ENCODE measurements at regions of chr4 and their contacts with region 1.

Region 1: DNA sequence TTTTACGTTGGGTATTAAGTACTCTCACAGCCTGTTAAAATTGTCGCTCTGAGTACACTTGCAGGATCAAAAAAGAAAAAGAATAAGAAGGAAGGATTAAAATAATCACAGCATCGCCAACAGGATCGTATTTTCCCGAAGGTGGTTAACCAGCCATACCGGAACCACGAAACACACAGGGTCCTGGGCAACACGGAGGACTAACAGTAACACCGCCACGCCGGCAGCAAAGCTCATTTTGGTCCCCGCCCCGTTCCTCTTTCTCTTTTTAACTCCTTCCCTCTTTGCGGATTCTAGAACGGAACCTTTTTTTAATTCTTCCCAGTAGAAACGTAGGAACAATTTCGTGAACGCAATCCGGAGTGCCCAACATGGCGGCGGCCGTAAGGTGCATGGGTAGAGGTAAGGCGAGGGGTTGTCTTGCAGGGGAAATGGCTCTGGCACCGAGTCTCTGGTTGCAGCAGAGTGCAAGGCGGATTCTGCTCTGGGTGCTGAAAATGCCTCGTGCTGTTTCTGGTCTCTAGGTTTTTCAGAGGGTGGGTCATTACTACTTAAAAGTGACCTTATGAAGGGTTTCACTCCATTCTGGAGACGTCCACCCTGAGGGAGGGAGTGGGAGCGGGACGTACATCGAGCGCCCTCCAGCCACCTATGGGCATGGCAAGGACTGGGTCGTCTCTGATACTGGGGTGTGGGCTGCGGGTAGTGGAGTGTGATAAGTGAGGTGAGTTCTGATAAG is at the start of gene MRPL1:
- DNase-seq: peak; percentile 70 to 93 (median 88)
- H3K4me3 ChIP-seq: peak within 1 kb of the TSS; percentile 56 to 95 (median 81)
- H3K27ac ChIP-seq: peak within 1 kb of the TSS; percentile 77 to 99 (median 96)
- H3K27me3 ChIP-seq: no peaks in the 10 kb centered on the region
- CTCF ChIP-seq: peak in 30 of 56 donors; percentile 3 to 39 (median 20)
- total RNA-seq, gene MRPL1: 11.6 to 51.3 (median 28.4) TPM

Region 2: GRCh38 chr4:77819843-77820648 is 42.6 kb before region 1 on chr4:
- intact Hi-C with region 1: loop called (anchors 1 kb)
- DNase-seq: peak; percentile 85 to 96 (median 92)
- H3K4me3 ChIP-seq: peak overlapping the region; percentile 54 to 99 (median 90)
- H3K27ac ChIP-seq: peak overlapping the region; percentile 76 to 100 (median 99)
- H3K27me3 ChIP-seq: no peaks in the 10 kb centered on the region
- CTCF ChIP-seq: peak in 21 of 56 donors; percentile 4 to 57 (median 20)

Measured in dorsolateral prefrontal cortex (tissue), 120 donors.